H1 (cell line): ENCODE measurements at regions of chr1 and their contacts with region 1.

Region 1: GRCh38 chr1:204162231-204163074 is 3.7 kb downstream of the REN start:
- DNase-seq: peak; percentile 63 to 100
- H3K4me3 ChIP-seq: no peak overlapping the region
- H3K27ac ChIP-seq: no peak overlapping the region
- H3K4me1 ChIP-seq: no peaks in the 10 kb centered on the region; a peak in 1 of 7 replicates
- H3K27me3 ChIP-seq: no peaks in the 10 kb centered on the region
- CTCF ChIP-seq: peak; percentile 99
- EP300 ChIP-seq: no peak
- POLR2A ChIP-seq: no peak
- RAD21 ChIP-seq: peak; percentile 100

Region 2: DNA sequence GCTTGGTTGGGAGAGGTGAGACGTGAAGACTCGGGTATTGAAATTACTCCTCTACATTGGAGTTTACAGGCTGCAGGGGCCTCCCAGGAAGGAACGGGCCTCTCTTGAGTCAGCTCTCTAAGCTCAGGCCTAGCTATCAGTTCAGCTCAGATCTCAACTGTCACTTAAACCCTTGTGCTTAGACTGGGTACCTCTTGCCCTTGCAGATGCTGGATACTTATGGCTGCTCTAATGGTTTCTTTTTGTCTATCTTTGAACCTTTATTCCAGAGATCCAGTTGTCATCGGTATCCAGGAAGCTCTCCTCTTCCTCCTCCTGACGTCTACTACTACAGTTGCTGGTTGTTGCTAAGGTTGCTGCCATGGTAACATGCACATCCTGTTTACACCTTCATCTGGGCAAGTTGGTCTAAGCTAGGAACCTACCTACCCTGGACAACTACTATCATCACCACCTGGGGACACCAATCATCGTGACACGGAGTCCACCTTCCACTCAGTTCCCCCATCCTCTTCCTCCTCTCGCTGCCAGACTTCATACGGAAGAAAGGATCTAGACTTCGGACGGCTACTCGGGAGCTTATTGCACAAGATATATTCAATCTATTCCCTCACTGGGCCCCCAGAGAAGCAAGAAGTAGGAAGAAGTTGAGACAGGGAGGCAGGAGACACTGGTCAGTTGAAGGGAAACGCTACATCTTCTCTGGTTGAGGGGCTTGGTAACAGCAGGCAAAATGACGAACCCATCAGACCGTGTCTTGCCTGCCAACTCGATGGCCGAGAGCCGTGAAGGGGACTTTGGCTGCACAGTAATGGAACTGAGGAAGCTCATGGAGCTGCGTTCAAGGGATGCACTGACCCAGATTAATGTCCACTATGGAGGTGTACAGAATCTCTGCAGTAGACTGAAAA is 479.7 kb before region 1 on chr1:
- CTCF ChIA-PET with region 1: no interaction called
- POLR2A ChIA-PET with region 1: no interaction called
- DNase-seq: no peak
- H3K4me3 ChIP-seq: peak overlapping the region in 2 of 4 experiments; percentile 6 to 37; a peak in 2 of 8 replicates
- H3K27ac ChIP-seq: no peak overlapping the region
- H3K4me1 ChIP-seq: peaks cover 1 to 6% (median 2%) of the 10 kb centered on the region in 4 experiments
- H3K27me3 ChIP-seq: no peaks in the 10 kb centered on the region
- CTCF ChIP-seq: no peak
- EP300 ChIP-seq: no peak
- POLR2A ChIP-seq: no peak
- RAD21 ChIP-seq: no peak

Region 3: GRCh38 chr1:203861379-203862184 is 300.9 kb before region 1 on chr1 and contains the start of gene SNRPE:
- CTCF ChIA-PET with region 1: interaction called, 26 read pairs
- POLR2A ChIA-PET with region 1: interaction called, 5 read pairs
- DNase-seq: peak; percentile 96 to 98
- H3K4me3 ChIP-seq: peak within 1 kb of the TSS; percentile 81 to 99 (median 87)
- H3K27ac ChIP-seq: peak within 1 kb of the TSS; percentile 98
- H3K4me1 ChIP-seq: peaks cover 0 to 3% (median 1%) of the 10 kb centered on the region in 4 experiments; a peak in 2 of 7 replicates
- H3K27me3 ChIP-seq: no peaks in the 10 kb centered on the region
- CTCF ChIP-seq: peak; percentile 89 to 93 (median 92)
- EP300 ChIP-seq: peak in 1 of 2 experiments; percentile 63; a peak in 2 of 3 replicates
- POLR2A ChIP-seq: peak; percentile 70 to 89
- RAD21 ChIP-seq: peak; percentile 98
- total RNA-seq, gene SNRPE: 419 and 461 TPM in 2 replicates

Region 4: GRCh38 chr1:204045430-204045829 is 117.0 kb before region 1 on chr1:
- CTCF ChIA-PET with region 1: no interaction called
- POLR2A ChIA-PET with region 1: no interaction called
- DNase-seq: no peak
- H3K4me3 ChIP-seq: no peak overlapping the region
- H3K27ac ChIP-seq: no peak overlapping the region
- H3K4me1 ChIP-seq: peaks cover 0 to 3% (median 2%) of the 10 kb centered on the region in 4 experiments; a peak in 1 of 7 replicates
- H3K27me3 ChIP-seq: no peaks in the 10 kb centered on the region
- CTCF ChIP-seq: no peak
- EP300 ChIP-seq: no peak
- POLR2A ChIP-seq: no peak
- RAD21 ChIP-seq: no peak

Region 5: DNA sequence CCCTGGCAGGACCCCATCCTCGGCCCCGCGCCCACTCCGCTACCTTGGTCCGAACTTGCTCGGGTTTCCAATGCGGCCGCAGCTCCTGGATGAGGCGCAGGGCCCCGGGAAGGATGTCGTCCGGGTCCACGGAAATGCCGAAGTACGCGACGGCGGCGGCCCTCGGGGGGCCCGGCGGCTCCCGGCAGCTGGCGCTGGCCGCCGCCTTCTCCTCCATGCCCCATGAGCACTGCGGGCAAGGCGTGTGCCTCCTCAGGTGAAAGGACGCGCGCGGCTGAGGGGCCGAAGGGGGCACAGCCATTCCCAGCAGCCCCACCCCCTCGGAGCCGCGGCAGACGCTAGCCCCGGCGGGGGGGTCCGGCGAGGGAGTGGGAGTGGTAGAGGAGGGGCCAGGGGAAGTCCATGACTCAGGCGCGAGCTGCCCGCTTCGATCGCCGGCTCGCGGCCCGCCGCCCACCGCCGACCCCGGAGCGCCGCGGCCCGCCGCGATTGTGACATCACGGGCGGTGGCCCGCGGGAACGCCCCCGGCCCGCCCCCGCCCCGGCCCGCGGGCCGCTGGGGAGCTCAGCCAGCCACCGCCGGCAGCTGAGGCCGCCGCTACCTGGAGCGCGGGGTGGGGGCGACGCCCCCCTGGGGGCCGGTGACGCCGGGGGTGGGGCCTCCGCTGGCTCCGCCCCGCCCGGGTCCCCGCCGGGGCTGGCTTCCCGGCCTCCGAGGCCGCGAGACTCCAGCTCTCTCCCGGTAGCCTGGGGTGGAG is 10.7 kb before region 1 on chr1 and contains the start of gene ETNK2:
- CTCF ChIA-PET with region 1: interaction called, 46 read pairs
- POLR2A ChIA-PET with region 1: no interaction called
- DNase-seq: peak in 1 of 2 experiments; percentile 89
- H3K4me3 ChIP-seq: peak within 1 kb of the TSS; percentile 61 to 77 (median 68)
- H3K27ac ChIP-seq: no peak within 1 kb of the TSS
- H3K4me1 ChIP-seq: peaks cover 0 to 40% (median 28%) of the 10 kb centered on the region in 4 experiments; a peak in 6 of 7 replicates
- H3K27me3 ChIP-seq: peaks cover 0 to 18% (median 17%) of the 10 kb centered on the region in 4 experiments; a peak in 5 of 7 replicates
- CTCF ChIP-seq: no peak
- EP300 ChIP-seq: no peak
- POLR2A ChIP-seq: no peak
- RAD21 ChIP-seq: no peak
- total RNA-seq, gene ETNK2: 20.1 and 23.1 TPM in 2 replicates

Region 6: GRCh38 chr1:204207136-204207616 is 44.7 kb after region 1 on chr1:
- CTCF ChIA-PET with region 1: interaction called, 360 read pairs
- POLR2A ChIA-PET with region 1: interaction called, 3 read pairs
- DNase-seq: peak; percentile 41 to 100
- H3K4me3 ChIP-seq: no peak overlapping the region
- H3K27ac ChIP-seq: no peak overlapping the region
- H3K4me1 ChIP-seq: peaks cover 0 to 2% (median 2%) of the 10 kb centered on the region in 4 experiments; a peak in 4 of 7 replicates
- H3K27me3 ChIP-seq: no peaks in the 10 kb centered on the region
- CTCF ChIP-seq: peak; percentile 96 to 98 (median 96)
- EP300 ChIP-seq: no peak
- POLR2A ChIP-seq: no peak
- RAD21 ChIP-seq: peak; percentile 72 to 81

Region 7: GRCh38 chr1:204398217-204399081 is 236.0 kb after region 1 on chr1:
- CTCF ChIA-PET with region 1: interaction called, 14 read pairs
- POLR2A ChIA-PET with region 1: no interaction called
- DNase-seq: peak; percentile 74 to 82
- H3K4me3 ChIP-seq: no peak overlapping the region
- H3K27ac ChIP-seq: no peak overlapping the region; the same call in 1 of the 2 replicates
- H3K4me1 ChIP-seq: no peaks in the 10 kb centered on the region
- H3K27me3 ChIP-seq: no peaks in the 10 kb centered on the region
- CTCF ChIP-seq: peak; percentile 26 to 98 (median 96)
- EP300 ChIP-seq: peak in 1 of 2 experiments; percentile 57; a peak in 1 of 3 replicates
- POLR2A ChIP-seq: no peak
- RAD21 ChIP-seq: peak; percentile 67 to 84

Region 8: GRCh38 chr1:204619721-204620120 is 457.3 kb after region 1 on chr1:
- CTCF ChIA-PET with region 1: no interaction called
- POLR2A ChIA-PET with region 1: no interaction called
- DNase-seq: no peak
- H3K4me3 ChIP-seq: no peak overlapping the region
- H3K27ac ChIP-seq: no peak overlapping the region
- H3K4me1 ChIP-seq: peaks cover under 1 to 12% (median 7%) of the 10 kb centered on the region in 4 experiments; a peak in 6 of 7 replicates
- H3K27me3 ChIP-seq: no peaks in the 10 kb centered on the region; a peak in 1 of 7 replicates
- CTCF ChIP-seq: peak; percentile 54 to 61 (median 60)
- EP300 ChIP-seq: no peak
- POLR2A ChIP-seq: no peak
- RAD21 ChIP-seq: peak; percentile 74 to 82